ENCODE measurements at regions of chr3 and their contacts with region 1.

Region 1: GRCh38 chr3:148727247-148727646 is 29.5 kb downstream of the AGTR1 start:
- H3K4me3 Mint-ChIP-seq: no peak overlapping the region
- H3K27ac Mint-ChIP-seq: no peak overlapping the region
- H3K4me1 Mint-ChIP-seq: peaks cover 8% of the 10 kb centered on the region
- H3K27me3 Mint-ChIP-seq: peaks cover 6% of the 10 kb centered on the region

Region 2: DNA sequence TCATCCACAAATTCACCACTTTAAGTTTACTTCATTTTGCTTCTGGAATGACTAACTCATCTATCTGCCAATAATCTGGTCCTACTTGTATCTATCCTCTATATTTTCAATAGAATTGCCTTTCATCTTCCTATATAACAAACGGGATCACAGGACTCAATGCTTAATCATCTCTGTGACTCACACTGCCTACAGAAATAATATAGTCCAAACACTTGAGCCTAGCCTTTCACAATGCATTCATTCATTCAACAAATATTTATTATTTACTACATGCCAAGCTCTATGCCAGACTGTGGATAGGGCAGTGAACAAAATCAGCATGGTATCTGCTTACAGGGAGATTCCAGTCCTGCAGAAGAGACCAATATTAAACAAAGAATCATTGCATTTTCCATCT is 46.2 kb before region 1 on chr3:
- intact Hi-C with region 1: no loop called
- H3K4me3 Mint-ChIP-seq: no peak overlapping the region
- H3K27ac Mint-ChIP-seq: no peak overlapping the region
- H3K4me1 Mint-ChIP-seq: no peaks in the 10 kb centered on the region
- H3K27me3 Mint-ChIP-seq: peaks cover 6% of the 10 kb centered on the region

Region 3: DNA sequence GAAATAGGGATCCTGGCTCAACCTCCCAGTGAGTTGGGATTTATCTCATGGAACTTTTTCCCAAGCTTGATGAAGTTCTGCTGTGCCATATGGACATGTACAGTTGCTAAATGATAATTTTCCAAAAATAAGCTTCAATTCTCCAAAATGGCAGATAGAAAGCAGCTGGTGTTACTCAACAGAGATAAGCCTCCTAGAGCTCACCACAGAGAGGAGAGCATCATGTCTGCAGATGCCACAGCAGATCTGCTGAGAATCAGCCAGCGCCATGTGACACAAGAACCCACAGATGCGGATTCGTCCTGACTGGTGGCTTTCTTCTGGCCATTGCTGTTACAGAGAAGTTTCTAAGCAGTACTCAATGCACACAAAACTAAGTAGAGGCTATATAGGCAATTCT is 21.0 kb after region 1 on chr3:
- intact Hi-C with region 1: no loop called
- H3K4me3 Mint-ChIP-seq: no peak overlapping the region
- H3K27ac Mint-ChIP-seq: no peak overlapping the region
- H3K4me1 Mint-ChIP-seq: no peaks in the 10 kb centered on the region
- H3K27me3 Mint-ChIP-seq: peaks cover 2% of the 10 kb centered on the region

Region 4: DNA sequence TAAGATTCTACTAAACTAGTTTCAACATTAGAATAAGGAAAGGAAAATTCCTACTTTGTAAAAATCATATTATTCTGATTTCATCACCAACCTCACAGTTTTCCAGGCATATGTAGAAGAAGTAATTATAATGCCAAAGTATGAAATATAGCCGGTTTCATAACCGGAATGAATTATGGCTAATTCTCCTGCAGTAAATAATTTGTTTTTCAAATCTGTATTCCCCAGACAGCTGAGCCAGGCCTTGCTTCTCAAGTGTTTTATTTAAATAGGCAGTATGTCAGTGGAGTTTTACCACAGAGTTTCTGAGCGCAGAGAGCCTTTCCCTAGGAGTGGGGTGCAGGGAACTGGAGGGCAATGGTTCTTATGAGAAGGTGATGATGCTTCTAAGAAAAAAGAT is 129.1 kb after region 1 on chr3:
- intact Hi-C with region 1: loop called (anchors 10 kb)
- H3K4me3 Mint-ChIP-seq: no peak overlapping the region
- H3K27ac Mint-ChIP-seq: no peak overlapping the region
- H3K4me1 Mint-ChIP-seq: no peaks in the 10 kb centered on the region
- H3K27me3 Mint-ChIP-seq: no peaks in the 10 kb centered on the region

Region 5: GRCh38 chr3:148880681-148881080 is 153.4 kb after region 1 on chr3:
- intact Hi-C with region 1: loop called (anchors 1 kb)
- H3K4me3 Mint-ChIP-seq: no peak overlapping the region
- H3K27ac Mint-ChIP-seq: no peak overlapping the region
- H3K4me1 Mint-ChIP-seq: no peaks in the 10 kb centered on the region
- H3K27me3 Mint-ChIP-seq: no peaks in the 10 kb centered on the region

Region 6: GRCh38 chr3:148943506-148944205 is 216.4 kb after region 1 on chr3:
- intact Hi-C with region 1: loop called (anchors 1 kb)
- H3K4me3 Mint-ChIP-seq: no peak overlapping the region
- H3K27ac Mint-ChIP-seq: no peak overlapping the region
- H3K4me1 Mint-ChIP-seq: no peaks in the 10 kb centered on the region
- H3K27me3 Mint-ChIP-seq: no peaks in the 10 kb centered on the region